Left cardiac atrium (tissue), 4 donors: ENCODE measurements at regions of chr7 and their contacts with region 1.

Region 1: GRCh38 chr7:155298834-155299534 is 1.3 kb downstream of the INSIG1 start:
- DNase-seq: peak; percentile 95
- ATAC-seq: peak; percentile 76 to 88

Region 2: GRCh38 chr7:155257482-155258225 is 41.3 kb before region 1 on chr7:
- intact Hi-C with region 1: loop called in 1 of 2 experiments (anchors 5 kb)
- DNase-seq: peak; percentile 84
- ATAC-seq: peak; percentile 86 to 89

Region 3: DNA sequence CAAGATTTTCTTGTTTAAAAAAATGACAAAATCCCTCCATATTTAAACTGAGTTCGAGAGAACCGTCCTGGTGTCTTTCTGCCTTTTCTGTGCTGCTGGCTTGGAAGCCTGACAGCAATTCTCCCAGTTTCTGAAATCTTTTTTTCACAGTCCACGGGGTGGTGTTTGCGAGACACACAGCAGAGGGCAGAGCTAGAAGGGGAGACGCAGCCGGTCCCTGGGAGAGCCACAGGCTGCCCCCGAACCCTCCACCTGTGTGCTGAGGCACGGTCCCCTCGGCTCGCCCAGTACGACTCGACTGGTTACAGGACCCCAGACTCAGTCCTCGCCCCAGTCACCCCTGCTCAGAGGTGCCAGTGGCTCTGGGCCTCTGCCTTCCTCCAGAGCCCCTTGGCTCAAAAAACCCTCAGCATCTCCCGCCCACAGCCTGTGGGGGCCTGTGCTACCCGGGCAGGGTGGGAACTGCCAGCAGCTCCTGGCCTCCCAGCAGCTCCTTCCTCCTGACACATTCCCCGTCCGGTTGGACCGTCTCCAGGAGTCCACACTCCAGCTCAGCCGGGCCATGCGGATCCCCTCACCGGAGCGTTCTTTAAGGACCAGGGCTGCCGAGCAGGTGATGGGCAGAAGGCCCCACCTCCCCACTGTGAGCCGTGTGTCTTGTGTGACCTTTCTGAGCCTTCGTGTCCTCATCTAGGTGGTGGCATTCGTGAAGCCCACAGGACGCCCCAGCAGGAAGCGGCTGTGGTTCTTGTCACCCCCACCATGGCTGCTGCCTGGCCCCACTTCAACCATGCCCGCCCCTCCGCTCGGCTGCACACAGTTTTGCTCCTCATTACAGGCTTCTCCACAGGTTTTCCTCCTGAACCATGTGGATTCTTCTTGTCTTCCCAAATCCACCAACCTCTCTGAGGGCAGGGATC is 106.7 kb after region 1 on chr7:
- intact Hi-C with region 1: no loop called
- DNase-seq: no peak
- ATAC-seq: no peak

Region 4: GRCh38 chr7:155477476-155477875 is 178.5 kb after region 1 on chr7:
- intact Hi-C with region 1: no loop called
- DNase-seq: no peak
- ATAC-seq: no peak